SK-MEL-5 (cell line): ENCODE measurements at regions of chr14 and their contacts with region 1.

Region 1: GRCh38 chr14:93655078-93655750 is 133.1 kb downstream of the PRIMA1 start:
- DNase-seq: peak; percentile 88

Region 2: DNA sequence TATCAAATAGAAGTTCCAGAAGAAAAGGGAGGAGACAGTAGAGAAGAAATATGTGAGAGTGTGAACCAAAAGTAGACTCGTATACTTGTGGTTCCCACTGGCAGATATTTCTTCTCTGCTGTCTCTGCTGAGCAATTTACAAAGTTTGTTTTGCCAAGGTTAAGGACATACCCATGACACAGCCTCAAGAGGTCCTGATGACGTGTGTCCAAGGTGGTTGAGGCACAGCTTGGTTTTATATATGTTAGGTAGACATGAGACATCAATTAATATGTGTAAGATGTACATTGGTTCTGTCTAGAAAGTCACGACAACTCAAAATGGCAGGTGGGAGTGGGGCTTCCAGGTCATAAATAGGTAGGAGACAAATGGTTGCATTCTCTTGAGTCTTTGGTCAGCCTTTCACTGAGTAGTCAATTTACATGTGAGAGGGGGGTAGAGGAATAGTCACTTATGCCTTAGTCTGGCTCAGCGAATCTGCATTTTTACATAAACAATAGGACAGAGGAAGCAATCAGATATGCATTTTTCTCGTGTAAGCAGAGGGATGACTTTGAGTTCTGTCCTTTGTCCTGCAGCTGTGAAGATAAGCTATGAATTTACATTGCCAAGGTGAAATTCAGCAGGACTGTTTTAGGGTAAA is 252.4 kb before region 1 on chr14:
- in situ Hi-C with region 1: no loop called
- DNase-seq: no peak

Region 3: GRCh38 chr14:93906341-93907329 is 251.4 kb after region 1 on chr14:
- in situ Hi-C with region 1: loop called (anchors 10 kb)
- DNase-seq: peak; percentile 87

Region 4: DNA sequence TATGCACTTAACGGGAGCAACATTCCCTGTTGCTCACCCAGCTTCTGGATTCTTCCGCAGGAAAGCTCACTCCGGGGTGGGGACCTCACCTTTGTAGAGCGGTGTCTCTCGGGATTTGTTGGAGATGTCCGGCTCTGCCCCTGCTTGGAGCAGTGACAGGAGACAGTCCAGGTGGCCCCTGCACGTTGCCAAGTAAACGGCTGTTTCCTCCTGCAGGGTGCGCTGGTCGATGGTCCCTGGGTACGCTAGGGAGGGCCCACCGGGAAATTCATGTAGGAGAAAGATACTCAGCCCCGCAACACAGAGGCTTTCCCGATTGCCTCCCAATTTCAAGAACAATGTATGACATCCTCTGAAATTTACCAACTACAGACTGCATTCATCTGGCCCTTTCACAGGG is 298.0 kb after region 1 on chr14:
- in situ Hi-C with region 1: no loop called
- DNase-seq: no peak